Left cardiac atrium (tissue), 4 donors: ENCODE measurements at regions of chr21 and their contacts with region 1.

Region 1: GRCh38 chr21:43718872-43719747 is at the start of gene PDXK:
- DNase-seq: peak; percentile 90
- ATAC-seq: peak; percentile 93 to 95
- total RNA-seq, gene PDXK: 101 to 120 TPM

Region 2: GRCh38 chr21:43667191-43667904 is 51.8 kb before region 1 on chr21:
- intact Hi-C with region 1: loop called in 1 of 2 experiments (anchors 10 kb)
- DNase-seq: no peak
- ATAC-seq: no peak

Region 3: DNA sequence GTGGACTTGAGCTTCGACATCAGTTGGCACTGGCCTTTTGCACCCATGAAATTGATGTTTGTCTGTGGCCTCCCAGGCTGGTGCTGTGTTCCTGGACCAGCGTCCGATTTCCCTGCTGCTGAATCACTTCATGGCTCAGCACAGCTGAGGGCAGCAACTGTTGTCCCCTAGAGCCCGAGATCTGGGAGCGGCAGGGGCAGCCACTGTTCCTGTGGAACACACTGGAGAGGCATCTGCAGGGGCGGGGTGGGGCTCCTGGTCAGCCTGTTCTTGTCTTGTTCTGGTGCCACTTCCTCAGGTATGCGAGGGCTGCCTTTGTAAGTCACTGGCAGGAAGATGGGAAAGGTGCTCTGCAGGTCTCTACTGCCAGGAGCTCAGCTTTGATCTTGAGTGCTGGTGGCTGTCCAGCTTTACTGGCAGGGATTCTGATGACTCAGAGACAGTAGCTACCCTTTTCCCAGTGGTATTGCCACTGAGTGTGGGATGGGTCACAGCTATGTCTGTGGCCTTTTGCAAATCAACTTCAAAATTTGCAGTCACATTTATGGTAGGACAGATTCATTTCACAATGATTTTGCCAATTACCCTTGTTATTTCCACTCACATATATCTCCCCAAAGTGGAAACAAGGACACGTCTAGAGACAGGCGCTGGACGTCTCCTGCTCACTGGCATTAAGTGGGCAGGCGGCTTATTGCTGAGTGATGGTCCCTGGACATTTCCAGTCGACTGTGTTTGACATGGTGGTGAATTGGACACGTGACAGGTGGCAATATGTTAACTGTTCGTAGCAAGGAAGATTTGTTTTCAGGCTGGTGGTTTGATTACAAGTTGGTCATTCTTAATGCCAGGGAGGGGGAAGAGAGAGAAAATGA is 161.2 kb after region 1 on chr21:
- intact Hi-C with region 1: no loop called
- DNase-seq: no peak
- ATAC-seq: peak; percentile 22 to 56